T-cell (primary cell): ENCODE measurements at regions of chr1 and their contacts with region 1.

Region 1: DNA sequence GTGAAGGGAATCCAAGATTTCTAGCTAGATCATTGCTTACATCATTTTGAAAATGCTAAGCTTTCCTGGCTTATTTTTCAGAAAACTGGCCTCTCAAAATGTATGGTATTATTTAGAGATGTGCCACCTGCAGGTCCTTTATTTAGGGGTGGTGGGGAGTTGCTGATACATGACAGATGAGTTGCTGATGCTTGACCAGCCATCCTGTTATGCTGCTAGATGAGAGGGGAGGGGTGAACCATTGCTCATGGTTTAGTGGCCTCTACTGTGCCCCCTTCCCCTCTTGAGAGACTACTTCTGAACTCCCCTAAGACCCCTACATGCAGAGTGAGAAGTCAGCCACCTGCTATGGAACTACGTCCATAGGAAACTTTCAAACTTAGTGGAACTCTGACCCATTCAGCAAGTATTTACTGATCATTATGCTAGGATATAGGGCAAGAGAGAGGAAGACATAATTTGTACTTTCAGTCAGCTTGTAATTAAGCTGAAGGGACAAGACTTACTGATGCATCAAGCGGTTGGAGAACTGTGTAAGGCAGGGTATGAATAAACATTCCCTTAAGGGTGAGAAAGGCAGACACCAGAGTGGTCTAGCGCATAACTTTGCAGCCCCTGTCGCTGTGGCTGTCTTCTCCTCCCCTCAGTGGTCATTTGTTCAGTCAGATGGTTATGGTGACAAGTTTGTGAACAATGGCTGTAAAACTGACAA is 34.6 kb downstream of the SLAMF6 start:
- DNase-seq: no peak
- ATAC-seq: peak in 1 of 4 experiments; percentile 30
- H3K4me3 ChIP-seq: no peak overlapping the region
- H3K4me3 Mint-ChIP-seq: no peak overlapping the region
- H3K27ac ChIP-seq: peak overlapping the region; percentile 39
- H3K27ac Mint-ChIP-seq: peak overlapping the region; percentile 78 to 83
- H3K4me1 ChIP-seq: no peaks in the 10 kb centered on the region
- H3K4me1 Mint-ChIP-seq: peaks cover 14 to 44% (median 22%) of the 10 kb centered on the region in 3 donors
- H3K27me3 ChIP-seq: no peaks in the 10 kb centered on the region
- H3K27me3 Mint-ChIP-seq: no peaks in the 10 kb centered on the region

Region 2: GRCh38 chr1:160466961-160467360 is 21.5 kb before region 1 on chr1:
- CTCF ChIA-PET with region 1: no interaction called
- POLR2A ChIA-PET with region 1: interaction called in 1 of 2 experiments, 10 read pairs
- DNase-seq: no peak
- ATAC-seq: no peak
- H3K4me3 ChIP-seq: no peak overlapping the region
- H3K4me3 Mint-ChIP-seq: no peak overlapping the region
- H3K27ac ChIP-seq: no peak overlapping the region
- H3K27ac Mint-ChIP-seq: no peak overlapping the region
- H3K4me1 ChIP-seq: peaks cover 7 to 15% of the 10 kb centered on the region in 2 experiments
- H3K4me1 Mint-ChIP-seq: peaks cover 28 to 51% (median 49%) of the 10 kb centered on the region in 3 donors
- H3K27me3 ChIP-seq: no peaks in the 10 kb centered on the region
- H3K27me3 Mint-ChIP-seq: no peaks in the 10 kb centered on the region

Region 3: DNA sequence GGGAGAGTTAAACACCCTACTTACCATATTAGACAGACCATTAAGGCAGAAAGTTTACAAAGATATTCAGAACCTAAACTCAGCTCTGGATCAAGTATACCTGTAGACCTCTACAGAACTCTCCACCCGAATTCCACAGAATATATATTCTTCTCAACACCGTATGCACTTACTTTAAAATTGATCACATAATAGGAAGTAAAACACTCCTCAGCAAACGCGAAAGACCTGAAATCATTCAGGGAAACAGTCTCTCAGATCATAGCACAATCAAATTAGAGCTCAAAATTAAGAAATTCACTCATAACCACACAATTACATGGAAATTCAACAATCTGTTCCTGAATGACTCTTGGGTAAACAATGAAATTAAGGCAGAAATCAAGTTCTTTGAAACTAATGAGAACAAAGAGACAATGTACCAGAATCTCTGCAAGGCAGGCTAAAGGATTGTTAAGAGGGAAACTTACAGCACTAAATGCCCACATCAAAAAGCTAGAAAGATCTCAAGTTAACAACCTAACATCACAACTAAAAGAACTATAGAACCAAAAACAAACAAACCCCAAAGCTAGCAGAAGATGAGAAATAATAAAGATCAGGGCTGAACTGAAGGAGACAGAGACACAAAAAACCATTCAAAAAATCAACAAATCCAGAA is 71.7 kb after region 1 on chr1:
- CTCF ChIA-PET with region 1: no interaction called
- POLR2A ChIA-PET with region 1: interaction called in 1 of 2 experiments, 11 read pairs
- DNase-seq: no peak
- ATAC-seq: peak; percentile 55 to 81 (median 58)
- H3K4me3 ChIP-seq: peak overlapping the region in 1 of 2 donors; percentile 5
- H3K4me3 Mint-ChIP-seq: peak overlapping the region; percentile 66 to 74 (median 74)
- H3K27ac ChIP-seq: peak overlapping the region; percentile 83
- H3K27ac Mint-ChIP-seq: peak overlapping the region; percentile 96 to 99
- H3K4me1 ChIP-seq: peaks cover 20 to 24% of the 10 kb centered on the region in 2 experiments
- H3K4me1 Mint-ChIP-seq: peaks cover 62 to 89% (median 88%) of the 10 kb centered on the region in 3 donors
- H3K27me3 ChIP-seq: no peaks in the 10 kb centered on the region
- H3K27me3 Mint-ChIP-seq: no peaks in the 10 kb centered on the region

Region 4: GRCh38 chr1:160779626-160780397 is 291.3 kb after region 1 on chr1:
- CTCF ChIA-PET with region 1: no interaction called
- POLR2A ChIA-PET with region 1: no interaction called
- DNase-seq: peak in 14 of 35 experiments; percentile 23 to 65 (median 39)
- ATAC-seq: peak in 2 of 4 experiments; percentile 43 to 47
- H3K4me3 ChIP-seq: no peak overlapping the region
- H3K4me3 Mint-ChIP-seq: no peak overlapping the region
- H3K27ac ChIP-seq: no peak overlapping the region
- H3K27ac Mint-ChIP-seq: no peak overlapping the region
- H3K4me1 ChIP-seq: peaks cover 0 to 21% of the 10 kb centered on the region in 2 experiments
- H3K4me1 Mint-ChIP-seq: peaks cover 23 to 37% (median 28%) of the 10 kb centered on the region in 3 donors
- H3K27me3 ChIP-seq: peaks cover 0 to 7% of the 10 kb centered on the region in 2 experiments
- H3K27me3 Mint-ChIP-seq: peaks cover 0 to 1% of the 10 kb centered on the region in 2 donors